ENCODE measurements at regions of chr14 and their contacts with region 1.

Region 1: GRCh38 chr14:51939727-51940390 is 49.5 kb upstream of the RTRAF start:
- DNase-seq: no peak
- H3K4me3 ChIP-seq: no peak overlapping the region
- H3K27me3 ChIP-seq: no peaks in the 10 kb centered on the region
- CTCF ChIP-seq: no peak

Region 2: DNA sequence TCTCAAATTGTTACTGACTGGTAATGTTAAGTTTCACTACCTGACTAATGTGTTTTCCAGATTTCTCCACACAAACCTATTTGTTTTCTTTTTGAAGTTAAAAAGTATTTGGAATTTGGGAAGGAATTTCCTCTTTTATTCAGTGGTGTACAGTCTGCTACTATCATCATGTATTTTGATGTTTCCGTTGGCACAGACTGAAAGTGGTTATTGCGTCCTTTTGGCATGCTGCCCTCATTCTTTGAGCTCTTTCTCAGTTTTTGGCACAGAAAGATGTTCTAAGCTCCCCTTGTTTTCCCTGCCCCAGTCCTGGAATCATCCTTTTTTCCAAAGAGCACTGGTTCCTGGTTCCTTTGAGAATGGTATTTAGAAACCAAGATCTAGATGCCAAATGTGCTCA is 18.1 kb after region 1 on chr14:
- CTCF ChIA-PET with region 1: no interaction called
- POLR2A ChIA-PET with region 1: no interaction called
- DNase-seq: no peak
- H3K4me3 ChIP-seq: no peak overlapping the region
- H3K27me3 ChIP-seq: no peaks in the 10 kb centered on the region
- CTCF ChIP-seq: no peak

Region 3: GRCh38 chr14:51979088-51979709 is 39.3 kb after region 1 on chr14:
- CTCF ChIA-PET with region 1: no interaction called
- POLR2A ChIA-PET with region 1: interaction called, 11 read pairs
- DNase-seq: no peak
- H3K4me3 ChIP-seq: no peak overlapping the region
- H3K27me3 ChIP-seq: peaks cover 4% of the 10 kb centered on the region; the same call in 1 of the 2 replicates
- CTCF ChIP-seq: peak; percentile 90

Measured in BJ (cell line).